Heart right ventricle (tissue), 16 donors: ENCODE measurements at regions of chr15 and their contacts with region 1.

Region 1: DNA sequence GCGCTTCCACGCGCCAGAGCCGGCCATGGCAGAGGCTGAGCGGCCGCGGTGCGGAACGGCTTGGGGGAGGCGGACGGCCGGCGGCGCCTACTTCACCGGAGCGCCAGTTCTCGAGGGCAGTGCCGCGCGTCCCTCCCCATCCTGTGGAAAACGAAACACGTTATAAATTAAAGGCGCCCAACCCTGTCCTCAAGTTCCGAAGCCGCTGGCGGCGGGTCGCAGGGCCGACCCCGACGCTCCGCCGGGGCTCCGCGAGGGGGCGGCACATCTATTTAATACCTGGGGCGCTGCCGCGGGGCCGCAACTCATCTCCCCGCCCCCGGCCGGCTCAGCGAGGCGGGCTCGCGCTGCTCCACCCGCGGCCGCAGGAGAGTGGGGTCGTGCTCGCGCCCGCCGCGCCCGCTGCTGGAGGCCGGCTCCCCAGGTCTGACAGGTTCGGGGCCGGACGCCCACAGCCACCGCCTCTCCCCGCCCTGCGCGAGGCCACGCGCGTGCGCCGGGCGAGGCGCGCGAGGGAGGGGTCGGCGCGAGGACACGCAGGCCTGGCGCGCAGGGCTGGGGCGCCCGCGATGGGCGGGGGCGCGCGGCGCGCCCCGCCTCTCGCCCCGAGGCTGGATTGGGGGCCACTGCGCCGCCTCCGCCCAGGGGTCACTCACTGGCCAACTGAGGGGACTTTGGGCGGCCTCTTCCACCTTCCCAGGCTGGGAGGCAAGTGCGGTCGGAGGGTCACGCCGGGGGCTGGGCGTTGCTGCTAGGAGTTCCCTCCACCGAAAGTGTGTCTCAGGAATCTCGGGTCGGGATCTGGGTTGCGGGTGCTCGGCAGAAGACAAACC is at the start of gene SLC30A4:
- DNase-seq: peak; percentile 54 to 79
- ATAC-seq: peak; percentile 91 to 99 (median 96)
- H3K4me3 ChIP-seq: peak within 1 kb of the TSS; percentile 54 to 96 (median 86)
- H3K27ac ChIP-seq: peak within 1 kb of the TSS; percentile 70 to 91 (median 86)
- H3K4me1 ChIP-seq: peaks cover 0 to 30% (median 25%) of the 10 kb centered on the region in 9 donors
- H3K27me3 ChIP-seq: peaks cover 0 to 31% (median 0%) of the 10 kb centered on the region in 7 donors
- CTCF ChIP-seq: peak; percentile 12 to 72 (median 51)
- total RNA-seq, gene SLC30A4: 2.5 to 4.5 (median 3.1) TPM

Region 2: GRCh38 chr15:45587095-45587860 is 64.7 kb after region 1 on chr15 and contains the start of gene BLOC1S6:
- intact Hi-C with region 1: loop called in 7 of 10 experiments (anchors 1 to 10 kb)
- DNase-seq: peak; percentile 87 to 94
- ATAC-seq: peak; percentile 90 to 96 (median 94)
- H3K4me3 ChIP-seq: peak within 1 kb of the TSS; percentile 72 to 99 (median 80)
- H3K27ac ChIP-seq: peak within 1 kb of the TSS; percentile 95 to 99 (median 97)
- H3K4me1 ChIP-seq: peaks cover 10 to 64% (median 49%) of the 10 kb centered on the region in 9 donors
- H3K27me3 ChIP-seq: peaks cover 0 to under 1% (median 0%) of the 10 kb centered on the region in 7 donors
- CTCF ChIP-seq: peak in 1 of 9 donors; percentile 13
- total RNA-seq, gene BLOC1S6: 24.8 to 33.9 (median 28.5) TPM

Region 3: GRCh38 chr15:45611305-45611704 is 88.8 kb after region 1 on chr15:
- intact Hi-C with region 1: loop called in 5 of 10 experiments (anchors 5 kb)
- DNase-seq: no peak
- ATAC-seq: no peak
- H3K4me3 ChIP-seq: no peak overlapping the region
- H3K27ac ChIP-seq: no peak overlapping the region
- H3K4me1 ChIP-seq: peaks cover 0 to 11% (median 0%) of the 10 kb centered on the region in 9 donors
- H3K27me3 ChIP-seq: no peaks in the 10 kb centered on the region
- CTCF ChIP-seq: peak in 6 of 9 donors; percentile 31 to 54 (median 46)

Region 4: DNA sequence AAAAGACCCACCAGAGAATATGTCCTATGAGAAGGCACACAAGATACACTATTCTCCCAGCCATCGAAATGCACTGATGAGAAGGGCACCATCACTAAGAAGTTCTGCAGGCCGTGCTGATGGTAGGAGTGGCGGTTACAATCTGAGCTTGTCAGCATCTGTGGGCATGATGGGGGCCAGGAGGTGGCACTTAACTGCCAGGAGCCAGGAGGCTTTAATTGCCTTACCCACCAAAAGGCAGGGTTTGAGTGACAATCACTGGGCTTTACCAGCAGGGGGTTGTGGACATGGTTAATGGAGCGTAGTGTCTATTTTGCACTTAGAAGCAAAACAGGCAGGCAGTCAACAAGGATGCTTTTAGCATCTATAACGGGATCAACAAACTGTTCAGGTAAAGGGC is 96.3 kb after region 1 on chr15:
- intact Hi-C with region 1: loop called in 5 of 10 experiments (anchors 5 kb)
- DNase-seq: no peak
- ATAC-seq: no peak
- H3K4me3 ChIP-seq: no peak overlapping the region
- H3K27ac ChIP-seq: no peak overlapping the region
- H3K4me1 ChIP-seq: peaks cover 0 to 3% (median 0%) of the 10 kb centered on the region in 9 donors
- H3K27me3 ChIP-seq: no peaks in the 10 kb centered on the region
- CTCF ChIP-seq: no peak